ENCODE measurements at regions of chr16 and their contacts with region 1.

Region 1: GRCh38 chr16:87263471-87263961 is 53.7 kb downstream of the C16orf95 start:
- DNase-seq: no peak
- ATAC-seq: no peak
- H3K4me3 ChIP-seq: no peak overlapping the region
- H3K27ac ChIP-seq: no peak overlapping the region
- H3K4me1 ChIP-seq: no peaks in the 10 kb centered on the region
- H3K27me3 ChIP-seq: peaks cover 0 to 5% (median 0%) of the 10 kb centered on the region in 7 donors
- CTCF ChIP-seq: no peak

Region 2: DNA sequence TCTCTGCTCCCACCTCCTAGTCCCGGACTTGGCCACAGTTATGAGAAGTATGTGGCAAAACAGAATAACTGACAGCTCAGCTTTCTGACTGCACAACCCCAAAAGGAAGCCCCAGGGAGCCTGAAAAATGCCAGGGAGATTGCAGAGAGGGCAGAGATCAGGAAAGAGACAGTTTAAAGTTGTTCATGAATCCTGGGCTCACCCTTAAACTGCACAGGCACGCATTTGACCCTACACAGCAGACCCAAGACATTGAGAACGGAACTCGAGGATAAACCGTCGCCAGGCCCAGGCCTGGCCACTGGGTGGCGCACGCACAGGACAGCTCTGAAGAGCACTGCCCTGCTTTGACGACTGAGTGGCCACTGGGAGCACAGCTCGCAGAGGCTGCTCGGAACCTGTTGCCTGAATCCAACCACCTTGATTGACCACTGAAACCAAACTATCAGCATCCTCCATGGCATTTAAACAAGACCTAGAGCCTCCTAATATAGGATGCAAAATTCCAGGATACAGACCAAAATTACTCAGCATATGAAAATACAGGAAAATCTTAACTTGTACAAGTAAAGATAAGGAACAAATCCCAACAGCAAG is 60.4 kb before region 1 on chr16:
- intact Hi-C with region 1: loop called in 1 of 10 experiments (anchors 10 kb)
- DNase-seq: peak in 1 of 2 donors; percentile 67
- ATAC-seq: peak in 6 of 8 donors; percentile 23 to 52 (median 50)
- H3K4me3 ChIP-seq: no peak overlapping the region
- H3K27ac ChIP-seq: no peak overlapping the region
- H3K4me1 ChIP-seq: peaks cover 0 to 11% (median 0%) of the 10 kb centered on the region in 9 donors
- H3K27me3 ChIP-seq: peaks cover 0 to 13% (median 0%) of the 10 kb centered on the region in 7 donors
- CTCF ChIP-seq: peak; percentile 24 to 84 (median 69)

Region 3: GRCh38 chr16:87235947-87236812 is 27.3 kb before region 1 on chr16:
- intact Hi-C with region 1: loop called in 1 of 10 experiments (anchors 1 kb)
- DNase-seq: no peak
- ATAC-seq: no peak
- H3K4me3 ChIP-seq: no peak overlapping the region
- H3K27ac ChIP-seq: no peak overlapping the region
- H3K4me1 ChIP-seq: peaks cover 0 to 5% (median 0%) of the 10 kb centered on the region in 9 donors
- H3K27me3 ChIP-seq: peaks cover 0 to 18% (median 12%) of the 10 kb centered on the region in 7 donors
- CTCF ChIP-seq: no peak

Region 4: GRCh38 chr16:87316923-87317749 is 53.6 kb after region 1 on chr16 and contains the start of gene C16orf95:
- intact Hi-C with region 1: no loop called
- DNase-seq: peak; percentile 95 to 97
- ATAC-seq: peak; percentile 97 to 99 (median 99)
- H3K4me3 ChIP-seq: peak within 1 kb of the TSS; percentile 71 to 99 (median 86)
- H3K27ac ChIP-seq: peak within 1 kb of the TSS; percentile 74 to 98 (median 92)
- H3K4me1 ChIP-seq: peaks cover 0 to 12% (median 9%) of the 10 kb centered on the region in 9 donors
- H3K27me3 ChIP-seq: no peaks in the 10 kb centered on the region
- CTCF ChIP-seq: peak; percentile 41 to 78 (median 66)
- total RNA-seq, gene C16orf95: 2.8 to 5.1 (median 3.8) TPM